Dendritic cell treated with granulocyte-macrophage colony-stimulating factor and Interleukin-4, amounts not matched to agents 40 ng/mL and 50 ng/mL, for 4 days (primary cell): ENCODE measurements at regions of chr11 and their contacts with region 1.

Region 1: GRCh38 chr11:12963792-12964536 is 45.2 kb upstream of the RASSF10 start:
- H3K4me3 Mint-ChIP-seq: no peak overlapping the region
- H3K27ac Mint-ChIP-seq: no peak overlapping the region
- H3K4me1 Mint-ChIP-seq: no peaks in the 10 kb centered on the region
- H3K27me3 Mint-ChIP-seq: no peaks in the 10 kb centered on the region

Region 2: DNA sequence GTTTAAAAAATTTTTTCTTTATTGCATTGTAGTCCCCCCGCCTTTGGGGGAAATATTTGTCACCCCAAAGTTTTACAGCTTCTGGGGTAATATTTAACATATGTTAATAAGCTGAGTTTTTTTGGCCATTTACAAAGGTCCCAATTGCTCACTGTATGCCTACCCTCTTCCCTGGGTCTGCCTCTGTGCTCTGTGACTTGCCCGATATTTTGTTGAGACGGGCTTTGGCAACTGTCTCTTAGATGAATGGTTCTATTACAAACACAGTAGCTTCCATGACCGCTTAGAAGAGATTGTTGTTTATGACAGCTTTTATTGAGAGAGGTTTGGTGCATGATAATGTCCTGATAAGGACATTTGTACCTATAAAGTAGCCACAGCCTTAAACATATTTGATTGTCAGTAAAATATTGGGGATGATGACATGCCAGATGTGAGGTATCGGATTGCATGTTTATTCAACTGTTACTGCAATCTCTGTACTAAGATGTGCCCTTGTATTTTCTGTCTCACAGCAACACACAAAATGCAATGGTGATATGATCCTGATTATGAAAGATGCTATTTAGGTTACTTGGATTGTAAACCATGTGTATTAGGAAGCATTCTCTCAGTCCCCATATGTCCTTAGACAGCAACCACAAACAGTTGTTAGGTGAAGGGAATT is 186.6 kb before region 1 on chr11:
- intact Hi-C with region 1: no loop called
- H3K4me3 Mint-ChIP-seq: no peak overlapping the region
- H3K27ac Mint-ChIP-seq: no peak overlapping the region
- H3K4me1 Mint-ChIP-seq: no peaks in the 10 kb centered on the region
- H3K27me3 Mint-ChIP-seq: peaks cover 3% of the 10 kb centered on the region

Region 3: GRCh38 chr11:12942157-12942556 is 21.8 kb before region 1 on chr11:
- intact Hi-C with region 1: no loop called
- H3K4me3 Mint-ChIP-seq: no peak overlapping the region
- H3K27ac Mint-ChIP-seq: no peak overlapping the region
- H3K4me1 Mint-ChIP-seq: no peaks in the 10 kb centered on the region
- H3K27me3 Mint-ChIP-seq: peaks cover 3% of the 10 kb centered on the region

Region 4: GRCh38 chr11:13016415-13016814 is 52.5 kb after region 1 on chr11:
- intact Hi-C with region 1: no loop called
- H3K4me3 Mint-ChIP-seq: no peak overlapping the region
- H3K27ac Mint-ChIP-seq: no peak overlapping the region
- H3K4me1 Mint-ChIP-seq: no peaks in the 10 kb centered on the region
- H3K27me3 Mint-ChIP-seq: peaks cover 41% of the 10 kb centered on the region

Region 5: DNA sequence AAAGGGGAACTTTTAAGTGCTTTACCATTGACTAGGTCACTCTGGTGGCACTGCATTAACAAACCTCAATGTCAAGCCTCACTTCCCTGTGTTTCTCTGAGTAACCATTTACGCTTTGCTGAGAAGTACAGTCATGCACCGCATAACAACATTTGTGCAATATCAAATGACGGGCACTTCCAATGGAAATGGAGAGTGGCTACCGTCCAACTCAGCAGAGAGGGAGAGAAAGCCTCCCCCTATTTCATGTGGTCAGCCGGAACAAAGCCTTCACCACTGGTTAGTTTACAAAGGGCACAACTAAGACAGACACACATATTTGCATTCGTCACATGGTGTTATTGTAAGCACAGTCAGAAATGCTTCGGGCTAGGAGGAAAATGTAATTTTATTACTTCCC is 162.5 kb after region 1 on chr11:
- intact Hi-C with region 1: no loop called
- H3K4me3 Mint-ChIP-seq: no peak overlapping the region
- H3K27ac Mint-ChIP-seq: no peak overlapping the region
- H3K4me1 Mint-ChIP-seq: no peaks in the 10 kb centered on the region
- H3K27me3 Mint-ChIP-seq: peaks cover 16% of the 10 kb centered on the region

Region 6: GRCh38 chr11:13152736-13153533 is 189.0 kb after region 1 on chr11:
- intact Hi-C with region 1: loop called (anchors 10 kb)
- H3K4me3 Mint-ChIP-seq: no peak overlapping the region
- H3K27ac Mint-ChIP-seq: no peak overlapping the region
- H3K4me1 Mint-ChIP-seq: no peaks in the 10 kb centered on the region
- H3K27me3 Mint-ChIP-seq: peaks cover 3% of the 10 kb centered on the region

Region 7: GRCh38 chr11:13343931-13344717 is 380.2 kb after region 1 on chr11:
- intact Hi-C with region 1: loop called (anchors 2 kb)
- H3K4me3 Mint-ChIP-seq: no peak overlapping the region
- H3K27ac Mint-ChIP-seq: no peak overlapping the region
- H3K4me1 Mint-ChIP-seq: peaks cover 68% of the 10 kb centered on the region
- H3K27me3 Mint-ChIP-seq: no peaks in the 10 kb centered on the region